Aorta (tissue), 5 donors: ENCODE measurements at regions of chr4 and their contacts with region 1.

Region 1: DNA sequence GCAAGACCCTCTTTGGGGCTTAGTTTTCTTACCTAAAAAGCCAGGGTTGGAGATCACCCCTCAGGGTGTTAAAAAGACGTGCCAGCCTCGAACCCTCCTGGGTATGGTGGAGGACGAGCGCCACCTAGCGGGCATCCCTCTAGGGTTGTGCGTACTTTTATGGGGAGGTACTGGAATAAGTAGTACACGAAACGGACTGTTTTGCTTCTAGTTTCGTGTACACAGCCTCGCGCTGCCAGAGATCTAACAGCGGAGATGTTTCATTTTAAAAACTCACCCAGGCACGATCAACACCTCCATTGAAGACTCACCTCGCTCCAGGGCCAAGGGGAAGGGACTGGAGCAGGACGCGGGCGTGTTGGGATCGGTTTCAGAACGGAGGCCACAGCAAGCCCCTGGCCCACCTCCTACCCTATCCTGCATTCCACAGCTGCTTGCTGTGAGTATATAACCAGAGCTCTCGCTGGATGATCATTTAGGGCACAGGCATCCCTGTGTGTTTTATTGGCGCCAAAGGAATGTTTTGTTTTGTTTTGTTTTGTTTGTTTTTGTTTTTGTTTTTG is 4.8 kb upstream of the NKX3-2 start:
- DNase-seq: peak; percentile 85 to 94
- ATAC-seq: peak; percentile 89
- H3K4me3 ChIP-seq: no peak overlapping the region
- H3K27ac ChIP-seq: no peak overlapping the region
- H3K4me1 ChIP-seq: no peaks in the 10 kb centered on the region
- H3K27me3 ChIP-seq: peaks cover 0 to 2% of the 10 kb centered on the region in 2 donors

Region 2: GRCh38 chr4:12729384-12729783 is 819.7 kb before region 1 on chr4:
- intact Hi-C with region 1: loop called (anchors 5 to 10 kb)
- DNase-seq: no peak
- ATAC-seq: no peak
- H3K4me3 ChIP-seq: no peak overlapping the region
- H3K27ac ChIP-seq: no peak overlapping the region
- H3K4me1 ChIP-seq: no peaks in the 10 kb centered on the region
- H3K27me3 ChIP-seq: no peaks in the 10 kb centered on the region

Region 3: DNA sequence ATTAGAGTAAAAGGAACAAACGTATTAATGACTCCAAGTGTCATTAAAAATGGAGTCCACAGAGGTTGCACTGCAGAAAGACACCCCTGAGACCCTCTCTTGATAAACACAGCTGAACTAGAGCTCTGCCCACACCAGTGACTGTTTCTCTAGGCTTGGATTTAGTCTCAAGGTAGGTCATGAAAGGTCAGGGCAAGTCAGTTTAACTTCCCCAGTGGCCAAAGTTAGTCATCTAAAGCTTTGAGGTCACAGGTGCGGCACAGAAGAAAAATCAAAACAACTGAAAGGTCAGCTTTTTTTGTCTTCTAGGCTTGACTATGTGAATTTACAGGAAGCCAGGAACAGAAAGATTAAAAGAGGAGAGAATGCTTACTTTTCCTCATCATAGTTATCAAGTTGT is 814.5 kb before region 1 on chr4:
- intact Hi-C with region 1: loop called (anchors 5 to 10 kb)
- DNase-seq: no peak
- ATAC-seq: no peak
- H3K4me3 ChIP-seq: no peak overlapping the region
- H3K27ac ChIP-seq: no peak overlapping the region
- H3K4me1 ChIP-seq: no peaks in the 10 kb centered on the region
- H3K27me3 ChIP-seq: no peaks in the 10 kb centered on the region

Region 4: GRCh38 chr4:12852338-12853307 is 696.4 kb before region 1 on chr4:
- intact Hi-C with region 1: loop called (anchors 2 kb)
- DNase-seq: no peak
- ATAC-seq: peak; percentile 84
- H3K4me3 ChIP-seq: no peak overlapping the region
- H3K27ac ChIP-seq: no peak overlapping the region
- H3K4me1 ChIP-seq: peaks cover 0 to 3% of the 10 kb centered on the region in 2 donors
- H3K27me3 ChIP-seq: peaks cover 0 to 2% of the 10 kb centered on the region in 2 donors